ENCODE measurements at regions of chr11 and their contacts with region 1.

Region 1: DNA sequence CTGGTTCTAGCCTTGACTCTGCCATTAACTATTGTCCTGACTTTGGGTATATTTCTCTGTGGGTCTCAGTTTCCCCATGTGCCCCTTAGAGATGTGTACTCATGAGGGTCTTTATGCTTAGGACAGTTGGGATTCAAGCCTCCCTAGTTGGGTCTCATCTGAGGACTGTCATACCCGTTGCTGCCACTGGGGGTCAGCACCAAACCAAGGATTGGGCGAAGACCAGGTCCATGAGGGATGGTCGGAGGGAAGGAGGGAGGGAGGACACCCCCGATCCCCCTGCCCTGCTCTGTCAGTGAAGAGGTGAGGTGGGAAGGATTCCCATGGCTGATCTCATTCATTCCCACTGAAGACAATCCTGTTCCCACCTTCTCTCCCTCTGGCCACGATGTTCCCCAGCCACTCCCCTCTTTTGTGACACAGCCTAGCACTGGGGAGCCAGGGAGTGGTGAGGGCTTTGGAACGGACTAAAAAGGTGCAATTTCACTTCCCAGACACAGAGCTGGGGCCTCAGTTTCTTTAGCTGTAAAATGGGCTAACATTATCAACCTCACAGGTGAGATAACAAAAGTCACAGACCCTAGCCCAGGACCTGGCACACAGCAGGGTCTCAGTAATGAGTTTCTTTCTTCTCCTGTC is 12.4 kb upstream of the KLHL35 start:
- DNase-seq: peak; percentile 56
- ATAC-seq: peak; percentile 77
- H3K4me3 ChIP-seq: no peak overlapping the region
- H3K27ac ChIP-seq: no peak overlapping the region
- H3K4me1 ChIP-seq: no peaks in the 10 kb centered on the region
- H3K27me3 ChIP-seq: no peaks in the 10 kb centered on the region
- CTCF ChIP-seq: peak; percentile 97
- EP300 ChIP-seq: no peak
- POLR2A ChIP-seq: no peak
- RAD21 ChIP-seq: peak; percentile 94

Region 2: GRCh38 chr11:75422253-75423231 is 22.9 kb before region 1 on chr11:
- CTCF ChIA-PET with region 1: no interaction called
- POLR2A ChIA-PET with region 1: no interaction called
- in situ Hi-C with region 1: no loop called
- intact Hi-C with region 1: no loop called
- DNase-seq: peak; percentile 86
- ATAC-seq: peak; percentile 85
- H3K4me3 ChIP-seq: peak overlapping the region in 1 of 3 experiments; percentile 24; a peak in 1 of 6 replicates
- H3K27ac ChIP-seq: peak overlapping the region; percentile 12
- H3K4me1 ChIP-seq: peaks cover 42% of the 10 kb centered on the region
- H3K27me3 ChIP-seq: no peaks in the 10 kb centered on the region
- CTCF ChIP-seq: no peak
- EP300 ChIP-seq: peak in 1 of 2 experiments; percentile 51; a peak in 1 of 4 replicates
- POLR2A ChIP-seq: no peak
- RAD21 ChIP-seq: no peak

Region 3: DNA sequence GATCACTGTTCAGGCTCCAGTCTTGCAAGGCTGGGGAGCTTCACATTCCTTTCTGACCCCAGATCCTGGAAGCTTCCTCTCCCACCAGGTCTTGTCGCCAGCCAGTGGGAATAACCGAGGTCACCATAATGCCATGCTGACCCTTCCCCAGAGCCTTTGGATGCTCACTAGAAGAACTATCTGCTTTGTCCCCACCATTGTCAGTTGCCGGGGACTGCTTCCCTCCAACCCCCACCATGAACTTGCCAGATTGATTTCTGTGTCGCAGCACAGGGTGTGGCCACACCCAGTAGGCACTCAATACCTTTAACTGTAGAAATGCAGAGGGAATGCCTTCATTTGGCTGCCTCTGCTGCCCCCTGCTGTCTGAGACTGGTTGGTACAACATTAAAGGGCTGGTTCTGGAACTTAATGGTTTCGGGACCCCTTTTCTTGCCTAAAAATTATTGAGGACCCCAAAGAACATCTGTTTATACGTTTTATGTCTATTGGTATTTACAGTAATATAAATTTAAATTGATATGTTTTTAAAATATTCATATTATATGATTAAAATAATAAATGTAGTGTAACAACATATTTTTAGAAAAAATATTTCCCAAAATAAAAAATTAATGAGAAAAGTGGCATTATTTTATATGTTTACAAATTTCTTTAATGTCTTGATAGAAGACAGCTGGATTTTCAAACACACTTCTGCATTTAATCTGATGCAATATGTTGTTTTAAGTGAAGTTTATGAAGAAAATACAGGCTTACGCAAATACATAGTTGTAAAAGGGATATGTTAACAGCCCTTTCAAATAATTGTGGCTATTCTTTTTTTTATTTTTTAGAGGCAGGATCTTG is 87.0 kb after region 1 on chr11:
- CTCF ChIA-PET with region 1: interaction called, 51 read pairs
- POLR2A ChIA-PET with region 1: no interaction called
- in situ Hi-C with region 1: loop called (anchors 5 kb)
- intact Hi-C with region 1: loop called (anchors 1 kb)
- DNase-seq: peak; percentile 70
- ATAC-seq: peak; percentile 40
- H3K4me3 ChIP-seq: no peak overlapping the region
- H3K27ac ChIP-seq: no peak overlapping the region
- H3K4me1 ChIP-seq: peaks cover 64% of the 10 kb centered on the region
- H3K27me3 ChIP-seq: peaks cover 0 to 14% of the 10 kb centered on the region in 2 experiments; a peak in 1 of 5 replicates
- CTCF ChIP-seq: peak; percentile 92
- EP300 ChIP-seq: no peak
- POLR2A ChIP-seq: no peak
- RAD21 ChIP-seq: peak; percentile 92

Region 4: GRCh38 chr11:75706260-75706729 is 260.9 kb after region 1 on chr11:
- CTCF ChIA-PET with region 1: no interaction called
- POLR2A ChIA-PET with region 1: no interaction called
- in situ Hi-C with region 1: no loop called
- intact Hi-C with region 1: no loop called
- DNase-seq: peak; percentile 65
- ATAC-seq: peak; percentile 98
- H3K4me3 ChIP-seq: peak overlapping the region in 2 of 3 experiments; percentile 5 to 55; a peak in 2 of 6 replicates
- H3K27ac ChIP-seq: no peak overlapping the region
- H3K4me1 ChIP-seq: peaks cover 15% of the 10 kb centered on the region
- H3K27me3 ChIP-seq: no peaks in the 10 kb centered on the region; a peak in 1 of 5 replicates
- CTCF ChIP-seq: peak; percentile 99
- EP300 ChIP-seq: no peak
- POLR2A ChIP-seq: no peak
- RAD21 ChIP-seq: peak; percentile 88

Measured in HepG2 (cell line).